GM10248 (cell line): ENCODE measurements at regions of chr10 and their contacts with region 1.

Region 1: DNA sequence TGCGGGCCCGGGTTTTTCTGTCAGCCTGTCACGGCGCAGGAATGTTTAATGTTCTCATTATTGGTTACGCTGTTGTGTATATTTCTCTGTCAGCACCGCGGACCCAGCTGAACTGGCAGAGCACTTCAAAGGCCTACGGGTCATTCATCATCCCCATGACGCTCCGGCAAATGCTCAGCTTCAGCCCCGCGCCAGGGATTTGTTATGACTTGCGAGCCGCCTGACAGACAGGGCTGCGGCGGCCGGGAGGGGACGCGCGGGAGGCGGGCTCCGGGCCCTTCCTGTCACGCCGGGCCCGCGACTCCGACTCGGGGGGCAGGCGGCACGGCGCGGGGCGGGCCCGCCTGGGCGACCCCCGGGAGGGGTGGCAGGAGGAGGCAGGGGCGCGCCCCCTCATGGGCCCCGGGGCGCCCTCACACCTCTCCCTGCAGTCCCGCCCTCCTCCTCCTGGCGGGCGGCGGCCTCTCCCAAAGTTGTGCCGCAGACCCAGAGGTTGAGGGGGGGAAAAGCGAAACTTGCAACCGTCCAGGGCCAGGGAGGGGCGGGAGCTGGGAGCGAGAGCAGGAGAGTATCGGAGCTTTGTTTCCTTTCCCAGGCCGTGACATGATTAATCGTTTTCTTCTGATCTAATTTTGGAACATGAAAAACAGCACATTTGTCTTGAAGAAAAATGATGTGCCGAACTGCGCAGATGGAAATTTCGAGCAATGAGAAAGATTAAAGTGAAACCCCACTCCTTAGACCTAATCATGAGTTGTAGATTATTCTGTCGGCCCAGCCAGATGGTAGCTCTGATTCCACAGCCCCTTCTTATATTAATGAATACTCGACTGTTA is 59.3 kb upstream of the COMTD1 start:
- DNase-seq: peak; percentile 59
- CTCF ChIP-seq: no peak

Region 2: DNA sequence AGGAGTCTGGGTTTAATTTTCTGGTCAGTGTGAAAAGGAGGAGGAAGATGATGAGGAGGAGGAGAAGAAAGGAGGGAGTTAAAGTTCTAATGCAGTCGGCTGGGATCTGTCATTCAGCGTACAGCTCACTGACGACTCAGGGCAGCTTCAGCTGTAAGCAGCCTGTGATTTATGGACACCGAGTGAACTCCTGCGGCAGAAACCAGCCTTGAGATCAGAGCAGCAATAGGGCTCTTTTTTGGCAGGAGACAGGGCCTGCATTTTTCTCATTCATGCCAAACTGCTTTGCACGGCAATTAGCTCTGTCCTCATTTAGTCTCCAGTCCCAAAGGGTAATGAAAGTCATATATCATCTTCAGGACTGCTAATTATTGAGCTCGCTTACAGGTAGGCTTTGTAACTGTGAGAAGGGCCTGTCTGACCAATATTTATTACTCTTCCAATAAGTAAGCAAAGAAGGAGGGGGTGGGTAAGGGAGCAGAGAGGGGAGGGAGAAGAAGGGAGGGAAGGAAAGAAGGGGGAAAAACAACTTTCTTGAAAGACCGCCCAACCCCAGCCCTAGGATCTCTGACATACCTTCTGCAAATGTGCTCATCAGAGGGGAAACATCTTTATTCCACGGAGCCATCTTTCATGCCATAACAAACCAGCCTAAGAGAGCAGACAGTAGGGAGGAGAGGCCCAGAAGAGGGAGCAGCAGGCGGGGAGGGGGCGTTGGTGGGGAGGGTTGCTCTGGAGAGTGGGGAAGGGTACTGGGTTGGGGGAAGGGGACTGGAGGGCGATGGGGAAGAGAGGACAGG is 11.2 kb before region 1 on chr10:
- CTCF ChIA-PET with region 1: interaction called, 30 read pairs
- POLR2A ChIA-PET with region 1: no interaction called
- DNase-seq: no peak
- CTCF ChIP-seq: no peak